Psoas muscle (tissue), 8 donors: ENCODE measurements at regions of chr1 and their contacts with region 1.

Region 1: DNA sequence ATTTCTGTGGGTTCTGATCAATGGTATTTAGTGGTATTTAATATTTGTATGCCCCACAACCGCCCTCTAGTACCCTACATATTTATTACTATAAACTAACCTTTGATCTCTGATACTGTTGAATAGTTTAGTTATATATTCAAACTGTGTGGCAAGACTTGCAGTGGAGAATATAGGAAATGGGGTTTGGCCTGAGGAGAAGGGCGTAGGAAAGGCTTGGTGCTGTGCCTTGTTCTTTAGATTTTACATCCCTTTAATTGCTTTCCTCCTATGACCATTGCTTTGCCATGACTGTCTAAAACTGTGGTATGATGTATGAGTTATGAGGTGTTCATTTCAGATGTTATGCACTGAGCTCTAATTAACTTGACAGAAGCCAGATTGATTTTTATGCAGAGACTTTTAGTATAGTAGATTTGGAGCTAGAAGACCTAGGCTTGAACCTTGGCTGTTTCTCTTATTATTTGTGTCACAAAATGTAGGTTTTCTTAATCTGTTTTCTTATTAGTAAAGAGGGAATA is 18.6 kb downstream of the DISP1 start:
- DNase-seq: no peak
- ATAC-seq: no peak
- H3K4me3 ChIP-seq: no peak overlapping the region
- H3K27ac ChIP-seq: no peak overlapping the region
- H3K4me1 ChIP-seq: peaks cover 5% of the 10 kb centered on the region
- H3K27me3 ChIP-seq: no peaks in the 10 kb centered on the region
- CTCF ChIP-seq: no peak

Region 2: GRCh38 chr1:222617367-222617951 is 216.0 kb before region 1 on chr1:
- intact Hi-C with region 1: no loop called
- DNase-seq: peak; percentile 93 to 96
- ATAC-seq: peak; percentile 82 to 93 (median 90)
- H3K4me3 ChIP-seq: peak overlapping the region; percentile 71
- H3K27ac ChIP-seq: peak overlapping the region; percentile 13
- H3K4me1 ChIP-seq: peaks cover 8% of the 10 kb centered on the region
- H3K27me3 ChIP-seq: no peaks in the 10 kb centered on the region
- CTCF ChIP-seq: no peak

Region 3: DNA sequence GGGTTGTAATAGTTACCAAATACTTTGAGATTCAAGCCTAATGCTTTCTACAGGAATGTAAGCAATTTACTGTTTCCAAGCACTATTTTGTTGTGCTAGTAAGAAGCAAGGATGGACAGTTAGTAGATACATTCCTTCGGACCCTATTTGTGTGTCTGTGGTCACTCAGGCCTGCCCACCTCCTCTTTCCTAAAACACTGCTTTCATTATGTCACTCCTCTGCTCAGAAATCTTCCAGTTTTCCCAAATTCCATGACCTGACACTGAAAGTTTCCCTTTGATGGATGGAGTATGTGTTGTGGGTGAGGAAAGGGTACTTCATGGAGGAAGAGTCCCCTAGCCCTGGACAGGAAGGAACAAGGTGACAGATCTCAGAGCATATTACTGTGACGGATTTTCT is 122.5 kb after region 1 on chr1:
- intact Hi-C with region 1: loop called in 1 of 2 experiments (anchors 2 kb)
- DNase-seq: no peak
- ATAC-seq: no peak
- H3K4me3 ChIP-seq: no peak overlapping the region
- H3K27ac ChIP-seq: no peak overlapping the region
- H3K4me1 ChIP-seq: no peaks in the 10 kb centered on the region
- H3K27me3 ChIP-seq: no peaks in the 10 kb centered on the region
- CTCF ChIP-seq: no peak